Endothelial cell of umbilical vein (primary cell): ENCODE measurements at regions of chrX and their contacts with region 1.

Region 1: GRCh38 chrX:103343105-103343504 is 13.1 kb downstream of the TCEAL7 start:
- DNase-seq: peak; percentile 64
- H3K4me3 ChIP-seq: no peak overlapping the region
- H3K27ac ChIP-seq: no peak overlapping the region
- H3K4me1 ChIP-seq: peaks cover 9% of the 10 kb centered on the region
- H3K27me3 ChIP-seq: no peaks in the 10 kb centered on the region
- CTCF ChIP-seq: peak; percentile 41 to 50
- POLR2A ChIP-seq: no peak

Region 2: GRCh38 chrX:101813200-101813599 is 1529.9 kb before region 1 on chrX:
- CTCF ChIA-PET with region 1: no interaction called
- POLR2A ChIA-PET with region 1: no interaction called
- dilution Hi-C with region 1: no loop called
- intact Hi-C with region 1: no loop called
- DNase-seq: no peak
- H3K4me3 ChIP-seq: no peak overlapping the region
- H3K27ac ChIP-seq: no peak overlapping the region
- H3K4me1 ChIP-seq: no peaks in the 10 kb centered on the region
- H3K27me3 ChIP-seq: no peaks in the 10 kb centered on the region
- CTCF ChIP-seq: no peak
- POLR2A ChIP-seq: no peak

Region 3: GRCh38 chrX:103214870-103215424 is 128.2 kb before region 1 on chrX and contains the start of gene BEX4:
- CTCF ChIA-PET with region 1: interaction called, 4 read pairs
- POLR2A ChIA-PET with region 1: no interaction called
- dilution Hi-C with region 1: no loop called
- intact Hi-C with region 1: loop called (anchors 5 kb)
- DNase-seq: peak; percentile 64
- H3K4me3 ChIP-seq: peak within 1 kb of the TSS; percentile 43 to 94 (median 61)
- H3K27ac ChIP-seq: peak within 1 kb of the TSS; percentile 70
- H3K4me1 ChIP-seq: peaks cover 5% of the 10 kb centered on the region
- H3K27me3 ChIP-seq: no peaks in the 10 kb centered on the region
- CTCF ChIP-seq: no peak
- POLR2A ChIP-seq: peak; percentile 62
- total RNA-seq, gene BEX4: 28.0 and 30.3 TPM in 2 replicates

Region 4: GRCh38 chrX:103356130-103356798 is 13.2 kb after region 1 on chrX and contains the start of gene TCEAL9:
- CTCF ChIA-PET with region 1: interaction called, 12 read pairs
- POLR2A ChIA-PET with region 1: no interaction called
- dilution Hi-C with region 1: no loop called
- intact Hi-C with region 1: no loop called
- DNase-seq: peak; percentile 79
- H3K4me3 ChIP-seq: peak within 1 kb of the TSS; percentile 81 to 97 (median 90)
- H3K27ac ChIP-seq: peak within 1 kb of the TSS; percentile 91
- H3K4me1 ChIP-seq: peaks cover 18% of the 10 kb centered on the region
- H3K27me3 ChIP-seq: no peaks in the 10 kb centered on the region
- CTCF ChIP-seq: no peak
- POLR2A ChIP-seq: peak; percentile 78
- total RNA-seq, gene TCEAL9: 98.3 and 99.2 TPM in 2 replicates

Region 5: GRCh38 chrX:103376118-103376978 is 33.2 kb after region 1 on chrX and contains the start of gene BEX3:
- CTCF ChIA-PET with region 1: interaction called, 6 read pairs
- POLR2A ChIA-PET with region 1: no interaction called
- dilution Hi-C with region 1: no loop called
- intact Hi-C with region 1: loop called (anchors 1 kb)
- DNase-seq: peak; percentile 55
- H3K4me3 ChIP-seq: peak within 1 kb of the TSS; percentile 74 to 91 (median 91)
- H3K27ac ChIP-seq: peak within 1 kb of the TSS; percentile 89
- H3K4me1 ChIP-seq: peaks cover 6% of the 10 kb centered on the region
- H3K27me3 ChIP-seq: no peaks in the 10 kb centered on the region
- CTCF ChIP-seq: no peak
- POLR2A ChIP-seq: peak; percentile 65
- total RNA-seq, gene BEX3: 227 and 233 TPM in 2 replicates

Region 6: DNA sequence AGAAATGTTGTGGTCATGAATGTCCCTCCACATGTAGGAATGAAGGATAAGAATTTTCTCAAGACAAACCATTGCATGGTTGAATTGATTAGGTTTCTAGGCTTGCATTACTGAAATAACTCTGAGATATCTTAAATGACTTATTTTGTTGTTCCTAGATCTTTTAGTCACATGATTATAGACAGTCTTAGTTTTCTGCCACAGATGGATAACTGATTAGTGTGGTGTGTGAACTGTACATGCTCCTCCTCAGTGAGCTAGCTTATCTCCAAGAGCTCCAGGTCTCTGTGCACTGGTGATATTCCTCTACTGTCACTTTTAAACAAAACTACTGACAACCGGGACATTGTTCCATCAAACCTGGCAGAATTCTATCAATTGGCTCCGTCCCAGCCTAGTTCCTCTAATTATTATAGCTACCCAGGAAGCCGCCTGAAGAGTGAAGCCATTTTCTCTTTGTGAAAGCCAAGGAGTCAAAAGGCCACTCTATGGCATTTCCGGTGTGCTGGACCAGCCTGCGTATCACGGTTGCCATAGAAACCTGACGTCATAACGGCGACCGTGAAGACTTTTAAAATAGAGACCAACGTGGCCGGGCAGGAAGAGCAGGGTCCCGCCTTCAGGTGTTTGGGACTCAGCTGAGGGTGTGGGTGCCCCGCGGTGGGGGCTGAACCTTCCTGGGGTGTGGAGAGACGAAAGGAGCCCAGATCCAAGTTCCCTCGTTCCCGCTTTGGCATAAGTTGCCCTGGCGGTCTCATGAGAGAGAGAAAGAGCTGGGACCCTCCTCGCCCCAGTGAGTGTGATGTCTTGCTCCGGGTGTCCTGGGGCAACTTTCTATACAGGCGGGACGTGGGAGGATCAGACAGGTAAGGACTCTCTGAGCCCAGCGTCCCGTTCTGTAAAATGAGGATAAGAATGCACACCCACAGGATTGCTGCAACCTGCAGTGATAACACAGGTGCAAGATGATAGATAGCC is 61.4 kb after region 1 on chrX:
- CTCF ChIA-PET with region 1: interaction called, 8 read pairs
- POLR2A ChIA-PET with region 1: no interaction called
- dilution Hi-C with region 1: no loop called
- intact Hi-C with region 1: loop called (anchors 1 kb)
- DNase-seq: peak; percentile 79
- H3K4me3 ChIP-seq: peak overlapping the region; percentile 19 to 62 (median 41)
- H3K27ac ChIP-seq: peak overlapping the region; percentile 71
- H3K4me1 ChIP-seq: peaks cover 11% of the 10 kb centered on the region
- H3K27me3 ChIP-seq: no peaks in the 10 kb centered on the region
- CTCF ChIP-seq: no peak
- POLR2A ChIP-seq: no peak

Region 7: GRCh38 chrX:103488332-103488731 is 145.2 kb after region 1 on chrX:
- CTCF ChIA-PET with region 1: interaction called, 11 read pairs
- POLR2A ChIA-PET with region 1: no interaction called
- dilution Hi-C with region 1: no loop called
- intact Hi-C with region 1: no loop called
- DNase-seq: peak; percentile 6
- H3K4me3 ChIP-seq: no peak overlapping the region
- H3K27ac ChIP-seq: no peak overlapping the region
- H3K4me1 ChIP-seq: no peaks in the 10 kb centered on the region
- H3K27me3 ChIP-seq: no peaks in the 10 kb centered on the region
- CTCF ChIP-seq: peak; percentile 7 to 25
- POLR2A ChIP-seq: no peak